Astrocyte of the cerebellum (primary cell): ENCODE measurements at regions of chr2 and their contacts with region 1.

Region 1: GRCh38 chr2:12928197-12928774 is 211.6 kb downstream of the TRIB2 start:
- DNase-seq: no peak
- H3K4me3 ChIP-seq: no peak overlapping the region
- CTCF ChIP-seq: no peak

Region 2: DNA sequence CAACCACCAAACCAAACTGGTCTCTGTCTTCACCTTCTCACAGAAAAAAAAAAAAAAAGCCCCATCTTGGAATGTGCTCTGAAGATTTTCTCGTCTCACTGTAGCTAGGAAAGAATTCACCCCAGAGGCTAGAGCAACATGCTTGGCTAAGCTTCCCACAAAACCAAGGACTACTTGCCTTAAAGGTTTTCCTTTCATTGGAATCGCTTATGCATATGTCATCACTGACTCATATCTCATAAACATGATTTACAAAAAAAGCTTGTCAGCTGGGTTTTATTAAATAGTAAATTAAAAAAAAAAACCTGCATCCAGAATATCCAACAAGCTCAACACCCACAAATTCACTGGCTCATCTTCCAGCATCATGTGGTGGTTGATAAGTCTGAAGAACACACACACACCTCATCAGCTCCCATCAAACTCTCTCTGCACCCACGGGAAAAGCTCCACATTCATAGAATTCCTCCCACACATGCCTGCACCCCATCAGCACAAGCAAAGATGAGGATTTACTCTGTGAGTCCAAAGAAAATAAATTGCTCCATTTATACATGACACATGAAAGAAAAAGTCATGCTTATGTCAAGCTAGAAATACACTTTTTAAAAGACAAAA is 393.5 kb before region 1 on chr2:
- in situ Hi-C with region 1: no loop called
- DNase-seq: peak; percentile 95
- H3K4me3 ChIP-seq: no peak overlapping the region
- CTCF ChIP-seq: no peak

Region 3: GRCh38 chr2:12719400-12720277 is 208.6 kb before region 1 on chr2:
- in situ Hi-C with region 1: loop called (anchors 5 kb)
- DNase-seq: no peak
- H3K4me3 ChIP-seq: peak overlapping the region; percentile 72
- CTCF ChIP-seq: no peak

Region 4: DNA sequence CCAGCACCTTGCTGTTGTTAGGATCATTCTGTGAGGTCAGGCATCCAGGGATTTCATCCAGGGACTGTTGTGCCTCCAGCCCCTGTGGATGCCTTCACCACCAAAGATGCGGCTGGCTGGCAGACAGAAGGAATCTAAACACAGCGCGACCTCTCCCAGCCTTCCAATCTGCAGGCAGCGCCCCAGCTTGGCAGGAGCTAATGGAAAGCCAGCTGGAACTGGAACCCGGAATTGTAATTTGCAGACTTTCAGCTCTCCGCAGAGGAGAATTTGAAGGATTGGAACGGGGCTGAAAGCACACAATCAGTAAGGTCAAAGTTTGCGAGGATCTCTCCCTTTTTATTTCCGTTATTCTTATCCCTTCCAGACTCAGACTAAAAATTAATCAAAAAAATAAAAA is 83.8 kb before region 1 on chr2:
- in situ Hi-C with region 1: no loop called
- DNase-seq: no peak
- H3K4me3 ChIP-seq: no peak overlapping the region
- CTCF ChIP-seq: no peak

Region 5: DNA sequence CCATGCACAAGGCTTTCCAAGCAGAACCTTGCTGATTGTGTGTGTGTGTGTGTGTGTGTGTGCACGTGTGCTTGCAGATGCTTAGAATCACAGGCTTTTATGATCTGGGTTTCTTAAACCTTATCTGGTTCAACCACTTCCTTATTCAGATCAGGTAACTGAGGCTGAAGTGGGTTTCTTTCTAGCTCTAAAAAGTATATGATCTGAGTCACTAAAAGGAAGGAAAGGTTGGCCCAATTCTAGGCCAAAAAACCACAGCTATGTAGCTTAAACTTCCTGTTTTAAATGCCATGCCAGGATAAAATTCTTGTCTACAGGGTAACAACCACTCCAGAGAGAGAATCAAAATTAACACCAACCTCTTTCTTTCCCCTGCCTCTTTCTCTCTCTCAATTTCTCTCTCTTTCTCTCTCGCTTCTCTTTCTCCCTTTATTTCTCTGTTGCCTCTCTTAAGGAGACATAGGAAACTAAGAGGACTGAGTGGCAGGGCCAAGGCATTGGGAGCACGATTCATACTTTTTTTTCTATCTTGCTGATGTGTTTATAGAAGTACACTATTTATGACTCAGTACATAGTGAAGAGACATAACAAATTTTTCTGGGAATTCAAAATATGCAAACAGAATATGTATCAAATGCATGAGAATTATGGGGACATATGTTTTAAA is 71.2 kb before region 1 on chr2:
- in situ Hi-C with region 1: loop called (anchors 5 kb)
- DNase-seq: peak; percentile 74
- H3K4me3 ChIP-seq: no peak overlapping the region
- CTCF ChIP-seq: no peak